ENCODE measurements at regions of chr12 and their contacts with region 1.

Region 1: GRCh38 chr12:103279444-103279843 is 216.3 kb downstream of the C12orf42 start:
- DNase-seq: peak; percentile 17
- H3K4me3 Mint-ChIP-seq: no peak overlapping the region
- H3K27ac Mint-ChIP-seq: peak overlapping the region; percentile 15
- H3K4me1 Mint-ChIP-seq: peaks cover 23% of the 10 kb centered on the region
- H3K27me3 Mint-ChIP-seq: peaks cover 14% of the 10 kb centered on the region

Region 2: DNA sequence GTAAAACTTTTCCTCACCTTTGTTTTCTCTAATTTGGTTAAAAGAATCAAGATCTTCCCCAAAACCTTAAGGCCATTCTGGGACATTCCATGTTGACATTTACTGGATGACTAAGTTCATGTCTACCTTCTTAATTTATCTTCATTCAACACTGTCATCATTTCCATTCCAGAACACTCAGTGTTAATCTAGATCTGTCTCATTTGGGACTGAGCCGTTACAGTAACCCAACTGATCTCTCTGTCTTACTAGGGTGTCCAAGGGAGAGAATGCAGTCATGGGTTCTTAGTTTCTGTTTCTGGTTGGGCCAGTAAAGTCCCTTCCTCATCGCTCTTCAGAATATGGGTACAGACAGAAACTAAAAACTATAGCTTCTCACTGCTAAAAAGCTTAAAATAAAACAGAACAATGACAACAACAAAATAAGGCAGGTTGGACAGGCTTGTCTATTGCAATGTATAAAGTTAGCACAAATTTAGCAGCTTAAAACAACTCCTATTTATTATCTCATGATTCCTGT is 177.2 kb before region 1 on chr12:
- intact Hi-C with region 1: loop called (anchors 5 kb)
- DNase-seq: no peak
- H3K4me3 Mint-ChIP-seq: no peak overlapping the region
- H3K27ac Mint-ChIP-seq: peak overlapping the region; percentile 60
- H3K4me1 Mint-ChIP-seq: peaks cover 8% of the 10 kb centered on the region
- H3K27me3 Mint-ChIP-seq: no peaks in the 10 kb centered on the region

Region 3: DNA sequence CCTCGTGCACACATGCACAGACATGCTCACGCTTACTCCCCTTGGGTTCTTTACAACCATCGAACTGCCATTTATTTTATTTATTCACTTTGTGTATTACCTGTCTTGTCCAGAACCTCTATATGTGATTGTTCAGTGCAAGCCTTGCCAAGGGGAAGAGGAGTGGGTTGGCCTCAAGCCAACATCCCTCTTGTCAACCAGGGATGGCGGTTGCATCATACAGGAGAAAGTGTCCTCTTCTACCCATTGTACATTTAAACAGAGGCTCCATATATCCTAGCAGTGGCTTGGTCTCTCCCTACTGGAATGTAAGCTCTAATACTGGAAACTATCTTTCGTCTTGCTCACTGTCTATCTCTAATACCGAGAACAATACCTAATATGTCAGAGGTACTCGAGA is 107.9 kb after region 1 on chr12:
- intact Hi-C with region 1: no loop called
- DNase-seq: no peak
- H3K4me3 Mint-ChIP-seq: no peak overlapping the region
- H3K27ac Mint-ChIP-seq: no peak overlapping the region
- H3K4me1 Mint-ChIP-seq: no peaks in the 10 kb centered on the region
- H3K27me3 Mint-ChIP-seq: no peaks in the 10 kb centered on the region

Region 4: GRCh38 chr12:103455020-103455763 is 175.7 kb after region 1 on chr12:
- intact Hi-C with region 1: loop called (anchors 5 kb)
- DNase-seq: peak; percentile 16
- H3K4me3 Mint-ChIP-seq: peak overlapping the region; percentile 2
- H3K27ac Mint-ChIP-seq: peak overlapping the region; percentile 13
- H3K4me1 Mint-ChIP-seq: peaks cover 63% of the 10 kb centered on the region
- H3K27me3 Mint-ChIP-seq: peaks cover 5% of the 10 kb centered on the region

Region 5: DNA sequence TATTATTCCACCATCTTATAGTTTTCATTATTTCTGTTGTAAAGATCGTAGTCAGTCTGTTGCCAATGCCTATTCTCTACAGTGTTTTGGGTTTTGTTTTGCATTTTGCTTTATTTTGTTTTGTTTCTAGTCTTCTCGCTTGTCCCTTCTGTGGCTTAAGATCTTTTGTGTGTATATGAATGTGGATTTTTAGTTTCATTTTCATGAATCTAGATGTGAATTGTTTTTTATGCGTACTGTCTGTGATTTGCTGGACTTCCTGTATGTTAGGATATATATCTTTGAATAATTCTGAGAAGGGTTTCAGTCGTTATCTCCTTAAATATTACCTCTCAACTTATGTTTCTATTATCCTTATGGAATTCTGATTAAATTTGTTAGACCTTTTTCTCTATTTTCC is 202.9 kb after region 1 on chr12:
- intact Hi-C with region 1: no loop called
- DNase-seq: no peak
- H3K4me3 Mint-ChIP-seq: peak overlapping the region; percentile 1
- H3K27ac Mint-ChIP-seq: no peak overlapping the region
- H3K4me1 Mint-ChIP-seq: peaks cover 6% of the 10 kb centered on the region
- H3K27me3 Mint-ChIP-seq: peaks cover 2% of the 10 kb centered on the region

Region 6: GRCh38 chr12:103530307-103531066 is 251.0 kb after region 1 on chr12:
- intact Hi-C with region 1: no loop called
- DNase-seq: no peak
- H3K4me3 Mint-ChIP-seq: no peak overlapping the region
- H3K27ac Mint-ChIP-seq: no peak overlapping the region
- H3K4me1 Mint-ChIP-seq: no peaks in the 10 kb centered on the region
- H3K27me3 Mint-ChIP-seq: peaks cover 2% of the 10 kb centered on the region

Measured in activated T-helper 1 cell treated with anti-CD3 and anti-CD28 coated beads, Interleukin-12 subunit alpha, Interleukin-12 subunit beta, Interleukin-2, Interleukin-4 antibody, amounts not matched to agents 30 ng/mL and 10 ng/mL and 1 ng/mL, durations not matched to agents 14 hours and 24 hours and 36 hours (primary cell).